ENCODE measurements at regions of chr12 and their contacts with region 1.

Region 1: DNA sequence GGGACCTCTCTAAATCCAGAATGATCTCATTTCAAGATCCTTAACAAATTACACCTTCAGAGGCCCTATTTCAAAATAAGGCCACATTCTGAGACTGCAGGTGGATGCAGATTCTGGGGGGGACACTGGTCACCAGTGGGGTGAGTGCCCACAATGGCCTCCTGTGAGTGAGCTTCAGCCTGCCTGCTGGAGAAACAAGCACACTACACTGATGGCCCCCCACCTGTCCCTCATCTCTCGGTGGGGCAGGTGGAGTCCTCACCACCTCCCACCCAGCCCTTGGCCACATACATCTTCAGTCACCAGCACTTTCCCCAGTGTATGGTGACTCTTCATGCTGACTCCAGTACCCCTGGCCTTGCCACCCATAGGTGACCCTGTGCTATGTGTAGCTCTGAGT is 46.4 kb downstream of the ARL6IP4 start:
- DNase-seq: no peak
- H3K4me3 ChIP-seq: no peak overlapping the region
- H3K27ac ChIP-seq: no peak overlapping the region
- H3K4me1 ChIP-seq: no peaks in the 10 kb centered on the region
- CTCF ChIP-seq: no peak

Region 2: GRCh38 chr12:122984612-122985337 is 42.1 kb before region 1 on chr12:
- CTCF ChIA-PET with region 1: no interaction called
- POLR2A ChIA-PET with region 1: no interaction called
- intact Hi-C with region 1: no loop called
- DNase-seq: no peak
- H3K4me3 ChIP-seq: no peak overlapping the region
- H3K27ac ChIP-seq: no peak overlapping the region
- H3K4me1 ChIP-seq: peaks cover 34% of the 10 kb centered on the region
- CTCF ChIP-seq: no peak

Region 3: DNA sequence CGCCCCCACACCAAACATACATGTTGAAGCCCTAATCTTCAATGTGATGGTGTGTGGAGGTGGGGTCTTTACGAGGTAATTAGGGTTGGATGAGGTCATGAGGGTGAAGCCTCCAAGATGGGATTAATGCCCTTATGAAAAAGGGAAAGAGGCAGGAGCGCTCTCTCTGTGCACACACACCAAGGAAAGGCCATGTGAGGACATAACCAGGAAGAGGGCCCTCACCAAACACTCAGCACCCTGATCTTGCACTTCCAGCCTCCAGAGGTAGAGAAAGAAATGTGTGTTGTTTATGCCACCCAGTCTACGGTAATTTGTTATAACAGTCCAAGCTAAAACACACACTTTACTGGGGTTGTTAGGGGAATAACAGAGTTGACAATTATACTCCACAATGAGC is 138.6 kb after region 1 on chr12:
- CTCF ChIA-PET with region 1: no interaction called
- POLR2A ChIA-PET with region 1: interaction called, 12 read pairs
- intact Hi-C with region 1: no loop called
- DNase-seq: no peak
- H3K4me3 ChIP-seq: no peak overlapping the region
- H3K27ac ChIP-seq: no peak overlapping the region
- H3K4me1 ChIP-seq: no peaks in the 10 kb centered on the region
- CTCF ChIP-seq: no peak

Measured in OCI-LY7 (cell line).